ENCODE measurements at regions of chr7 and their contacts with region 1.

Region 1: DNA sequence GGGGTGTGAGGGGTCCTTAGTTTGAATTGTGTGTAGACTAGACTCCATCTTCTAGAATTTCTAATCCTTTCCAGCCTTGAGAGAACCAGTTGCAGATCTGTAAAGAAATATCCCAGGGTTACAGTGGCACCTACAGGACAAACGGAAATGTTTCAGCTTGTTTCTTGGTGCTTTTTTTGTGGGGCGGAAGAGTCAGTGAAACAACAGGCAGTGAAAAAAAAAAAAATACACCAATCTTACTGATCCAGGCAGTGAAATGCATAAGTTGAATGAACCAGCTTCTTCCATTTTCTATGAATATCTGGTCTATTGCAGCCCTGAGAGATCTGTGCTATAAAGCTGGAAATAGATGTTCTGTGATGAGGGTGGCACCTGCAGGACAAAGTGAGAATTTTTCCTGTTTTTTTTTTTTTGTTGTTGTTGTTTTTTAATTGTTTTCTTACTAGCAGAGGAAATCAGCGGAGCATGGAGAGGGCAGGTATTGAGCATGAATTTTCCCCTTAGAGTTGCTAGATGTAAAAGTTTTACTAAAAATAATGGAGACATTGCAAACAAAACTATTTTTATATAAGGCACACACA is 81.9 kb upstream of the DYNC1I1 start:
- DNase-seq: peak; percentile 51
- ATAC-seq: peak; percentile 12; the same call in 1 of the 2 replicates
- H3K4me3 ChIP-seq: no peak overlapping the region; the same call in 1 of the 2 replicates
- H3K27ac ChIP-seq: no peak overlapping the region
- H3K4me1 ChIP-seq: peaks cover 17% of the 10 kb centered on the region
- H3K27me3 ChIP-seq: peaks cover 11% of the 10 kb centered on the region; the same call in 1 of the 2 replicates
- CTCF ChIP-seq: peak; percentile 80

Region 2: GRCh38 chr7:94289071-94289470 is 1401.4 kb before region 1 on chr7:
- CTCF ChIA-PET with region 1: no interaction called
- POLR2A ChIA-PET with region 1: no interaction called
- intact Hi-C with region 1: loop called (anchors 2 kb)
- DNase-seq: peak; percentile 85
- ATAC-seq: peak; percentile 100
- H3K4me3 ChIP-seq: no peak overlapping the region
- H3K27ac ChIP-seq: no peak overlapping the region
- H3K4me1 ChIP-seq: no peaks in the 10 kb centered on the region
- H3K27me3 ChIP-seq: peaks cover 13% of the 10 kb centered on the region
- CTCF ChIP-seq: peak; percentile 96

Region 3: DNA sequence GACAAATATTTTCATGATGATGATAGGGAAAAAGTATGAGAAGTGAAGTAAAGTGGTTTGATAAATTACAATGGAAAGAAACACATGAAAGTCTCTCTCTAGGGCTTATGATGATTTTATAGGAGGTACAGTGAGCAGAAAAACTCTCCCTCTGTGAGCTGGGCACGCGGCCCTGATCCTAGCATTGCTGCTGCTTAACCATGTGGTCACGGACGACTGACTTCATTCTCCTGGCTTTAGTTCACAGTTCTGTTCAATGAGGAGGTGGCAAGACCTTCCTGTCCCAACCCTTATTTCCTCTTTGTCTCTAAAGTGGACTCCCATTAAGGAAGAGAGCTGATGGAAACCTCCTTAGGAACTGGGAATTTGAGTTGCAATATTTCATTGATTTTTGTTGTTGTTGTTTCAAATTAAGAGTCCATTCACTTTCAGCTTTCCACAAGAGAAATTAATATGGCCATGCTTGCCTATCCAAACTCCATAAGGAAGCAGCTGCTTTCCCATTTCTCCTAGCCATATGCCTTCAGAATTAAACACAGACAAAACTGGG is 286.1 kb before region 1 on chr7:
- CTCF ChIA-PET with region 1: no interaction called
- POLR2A ChIA-PET with region 1: no interaction called
- intact Hi-C with region 1: no loop called
- DNase-seq: no peak
- ATAC-seq: no peak
- H3K4me3 ChIP-seq: no peak overlapping the region
- H3K27ac ChIP-seq: no peak overlapping the region
- H3K4me1 ChIP-seq: no peaks in the 10 kb centered on the region
- H3K27me3 ChIP-seq: no peaks in the 10 kb centered on the region
- CTCF ChIP-seq: no peak

Region 4: DNA sequence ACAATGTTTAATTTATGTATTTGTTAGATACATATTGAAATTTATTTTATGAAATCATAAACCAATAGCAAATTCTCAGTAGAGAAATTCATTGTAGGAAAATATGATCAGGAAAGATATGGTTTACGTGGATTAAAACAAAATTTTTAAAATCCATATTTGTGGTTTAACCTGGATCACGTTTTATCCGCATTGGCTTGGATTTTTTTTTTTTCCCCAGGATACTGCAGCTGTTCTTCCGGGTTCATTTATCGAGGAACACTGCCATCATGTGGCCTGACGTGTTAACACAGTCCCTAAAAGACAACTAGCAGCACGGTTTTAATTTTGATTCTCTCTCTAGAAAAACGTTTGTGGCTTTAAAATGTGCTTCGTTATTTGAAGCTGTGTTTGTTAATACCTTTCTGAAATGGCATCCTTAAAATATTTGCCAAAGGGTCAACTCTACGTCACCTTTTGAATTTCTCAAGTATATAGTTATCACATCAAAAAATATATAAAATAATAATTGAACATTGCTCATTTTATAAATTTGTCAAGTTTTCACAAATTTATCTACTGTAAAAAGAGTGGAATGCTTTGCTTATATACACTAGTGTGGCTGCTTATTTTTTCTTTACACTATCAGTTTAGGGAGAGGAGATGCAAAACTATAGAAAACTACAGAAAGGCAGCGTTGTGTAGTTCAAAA is 213.4 kb before region 1 on chr7:
- CTCF ChIA-PET with region 1: interaction called, 13 read pairs
- POLR2A ChIA-PET with region 1: interaction called, 3 read pairs
- intact Hi-C with region 1: no loop called
- DNase-seq: peak; percentile 76
- ATAC-seq: peak; percentile 48
- H3K4me3 ChIP-seq: no peak overlapping the region
- H3K27ac ChIP-seq: no peak overlapping the region
- H3K4me1 ChIP-seq: no peaks in the 10 kb centered on the region
- H3K27me3 ChIP-seq: no peaks in the 10 kb centered on the region
- CTCF ChIP-seq: peak; percentile 86

Region 5: DNA sequence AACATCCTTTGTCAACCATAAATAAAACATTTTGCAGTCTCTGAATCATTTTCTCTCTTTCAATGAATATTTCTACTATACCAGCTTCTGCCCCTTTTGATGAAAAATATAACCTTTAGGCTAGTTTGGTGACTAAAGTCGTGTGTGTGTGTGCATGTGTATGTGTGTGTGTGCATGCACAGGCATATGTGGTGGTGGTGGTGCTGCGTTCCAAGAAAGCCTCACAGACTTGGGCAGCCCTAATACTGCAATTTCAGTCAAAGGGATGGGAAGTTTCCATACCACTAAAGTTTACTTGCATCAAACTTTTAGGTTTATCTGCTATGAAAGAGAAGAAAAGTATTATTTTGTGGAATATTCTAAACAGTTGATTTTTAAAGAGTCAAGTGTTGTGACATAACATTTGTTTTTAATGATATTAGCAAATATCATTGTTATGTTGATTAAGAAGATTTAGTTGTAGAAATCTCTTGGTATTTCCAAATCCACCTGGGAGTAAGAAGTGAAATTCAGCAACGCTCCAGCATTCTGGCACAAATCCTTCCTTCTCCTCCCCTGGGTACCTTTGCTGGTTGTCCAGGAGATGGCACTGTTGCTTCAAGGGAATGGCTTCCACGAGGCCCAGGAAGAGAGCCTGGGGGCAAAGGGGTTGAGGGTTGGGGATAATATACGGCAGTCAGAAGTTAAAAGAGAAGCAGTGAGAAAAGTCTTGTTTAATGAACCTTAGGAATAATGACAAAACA is 163.3 kb before region 1 on chr7:
- CTCF ChIA-PET with region 1: interaction called, 21 read pairs
- POLR2A ChIA-PET with region 1: no interaction called
- intact Hi-C with region 1: loop called (anchors 1 kb)
- DNase-seq: peak; percentile 65
- ATAC-seq: peak; percentile 70
- H3K4me3 ChIP-seq: no peak overlapping the region
- H3K27ac ChIP-seq: no peak overlapping the region
- H3K4me1 ChIP-seq: 0 out of 2 replicates have a peak, but pooled peaks cover 4% of the 10 kb centered on the region
- H3K27me3 ChIP-seq: peaks cover 21% of the 10 kb centered on the region
- CTCF ChIP-seq: peak; percentile 95

Region 6: DNA sequence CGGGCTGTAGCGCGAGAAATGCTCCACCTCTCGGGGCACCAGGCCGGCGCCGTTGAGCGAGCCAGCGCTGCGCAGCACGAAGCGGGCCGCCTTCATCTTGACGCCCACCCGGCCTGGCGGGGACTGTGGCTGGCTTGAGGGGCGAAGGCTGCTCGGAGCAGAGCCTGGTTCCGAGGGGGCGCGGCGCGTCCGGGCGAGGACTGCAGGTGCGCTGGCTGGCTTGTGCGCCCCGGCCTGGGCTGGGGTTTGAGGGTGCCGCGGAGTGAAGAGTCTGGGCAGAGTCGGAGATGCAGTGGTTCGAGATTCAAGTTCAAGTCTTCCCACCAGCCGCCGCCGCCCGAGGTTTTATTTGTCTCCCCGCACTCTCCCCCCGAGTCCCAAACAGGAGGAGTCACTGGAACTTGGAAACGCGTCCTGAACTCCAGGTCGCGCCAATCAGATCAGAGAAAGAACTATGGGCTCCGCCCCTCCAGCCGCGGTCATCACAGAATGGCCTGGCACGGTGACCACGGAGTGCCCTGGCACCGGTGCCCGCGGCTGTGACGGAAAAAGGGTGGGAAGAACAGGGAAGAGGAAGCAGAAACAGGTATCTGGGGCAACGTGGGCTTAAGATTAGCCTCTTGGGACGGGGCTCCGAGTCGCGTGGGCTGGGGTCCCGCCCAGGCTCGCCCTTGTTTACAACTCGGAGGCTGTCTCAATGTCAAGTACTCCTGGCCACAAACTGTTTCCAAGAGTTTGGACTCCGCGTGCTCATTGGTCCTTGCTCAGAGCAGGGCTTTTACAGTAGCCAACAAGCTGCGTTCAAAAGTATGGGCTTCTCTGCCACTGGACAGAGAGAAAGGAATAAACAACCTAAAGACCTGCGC is 94.0 kb before region 1 on chr7 and contains the start of gene PDK4:
- CTCF ChIA-PET with region 1: no interaction called
- POLR2A ChIA-PET with region 1: no interaction called
- intact Hi-C with region 1: loop called (anchors 1 kb)
- DNase-seq: peak; percentile 73
- ATAC-seq: peak; percentile 94
- H3K4me3 ChIP-seq: peak within 1 kb of the TSS; percentile 80
- H3K27ac ChIP-seq: no peak within 1 kb of the TSS
- H3K4me1 ChIP-seq: peaks cover 8% of the 10 kb centered on the region; the same call in 1 of the 2 replicates
- H3K27me3 ChIP-seq: no peaks in the 10 kb centered on the region
- CTCF ChIP-seq: no peak
- total RNA-seq, gene PDK4: 0.63 and 3.2 TPM in 2 replicates

Region 7: DNA sequence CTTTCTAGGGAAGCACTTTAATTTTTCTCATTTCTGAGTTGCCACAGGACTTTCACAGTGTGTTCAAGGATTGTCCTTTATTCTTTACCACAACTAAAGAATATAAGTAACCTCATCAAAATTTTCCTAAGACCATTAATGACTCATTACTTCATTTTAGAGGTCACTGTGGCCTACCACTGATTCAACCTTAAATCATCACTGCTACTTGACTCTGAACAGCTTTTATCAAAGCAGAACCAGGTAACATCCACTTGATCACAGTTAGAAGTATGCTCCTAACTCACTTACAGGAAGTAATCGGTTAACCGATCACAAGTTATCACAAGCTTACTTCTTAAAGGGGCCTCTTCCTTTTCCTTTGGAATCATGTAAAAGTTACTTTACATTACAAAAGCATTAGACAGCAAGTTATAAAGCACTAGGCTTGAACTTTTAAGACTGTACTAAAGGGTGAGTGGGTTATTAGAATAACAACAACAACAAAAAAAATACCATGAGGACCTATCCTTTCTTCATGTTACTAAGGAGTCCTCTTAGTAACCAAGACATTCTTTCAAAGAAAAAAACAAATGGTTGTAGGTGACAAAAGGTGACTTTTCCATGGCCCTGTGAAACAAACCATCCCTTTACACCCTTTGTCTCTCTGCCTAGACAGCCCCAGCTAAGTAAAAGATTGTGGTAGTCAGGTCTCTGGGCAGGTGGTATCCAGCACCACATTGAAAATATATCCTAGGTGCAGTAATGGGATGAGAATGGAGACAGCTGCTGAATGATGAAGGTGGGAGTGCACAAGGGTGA is 54.1 kb before region 1 on chr7:
- CTCF ChIA-PET with region 1: no interaction called
- POLR2A ChIA-PET with region 1: no interaction called
- intact Hi-C with region 1: no loop called
- DNase-seq: peak; percentile 44
- ATAC-seq: peak; percentile 70
- H3K4me3 ChIP-seq: no peak overlapping the region
- H3K27ac ChIP-seq: no peak overlapping the region
- H3K4me1 ChIP-seq: peaks cover 12% of the 10 kb centered on the region; the same call in 1 of the 2 replicates
- H3K27me3 ChIP-seq: peaks cover 4% of the 10 kb centered on the region; the same call in 1 of the 2 replicates
- CTCF ChIP-seq: no peak

Region 8: GRCh38 chr7:95723592-95724180 is 33.2 kb after region 1 on chr7:
- CTCF ChIA-PET with region 1: interaction called, 11 read pairs
- POLR2A ChIA-PET with region 1: no interaction called
- intact Hi-C with region 1: no loop called
- DNase-seq: peak; percentile 68
- ATAC-seq: peak; percentile 93
- H3K4me3 ChIP-seq: no peak overlapping the region
- H3K27ac ChIP-seq: no peak overlapping the region
- H3K4me1 ChIP-seq: no peaks in the 10 kb centered on the region
- H3K27me3 ChIP-seq: peaks cover 20% of the 10 kb centered on the region
- CTCF ChIP-seq: peak; percentile 73

Measured in PC-3 (cell line).